Mammary epithelial cell (primary cell): ENCODE measurements at regions of chr11 and their contacts with region 1.

Region 1: GRCh38 chr11:86116386-86116726 is 47.5 kb upstream of the PICALM start:
- DNase-seq: peak; percentile 94
- H3K4me3 ChIP-seq: peak overlapping the region in 2 of 3 experiments; percentile 20 to 27
- H3K27ac ChIP-seq: peak overlapping the region; percentile 98
- H3K4me1 ChIP-seq: peaks cover 27% of the 10 kb centered on the region
- H3K27me3 ChIP-seq: no peaks in the 10 kb centered on the region
- CTCF ChIP-seq: no peak

Region 2: DNA sequence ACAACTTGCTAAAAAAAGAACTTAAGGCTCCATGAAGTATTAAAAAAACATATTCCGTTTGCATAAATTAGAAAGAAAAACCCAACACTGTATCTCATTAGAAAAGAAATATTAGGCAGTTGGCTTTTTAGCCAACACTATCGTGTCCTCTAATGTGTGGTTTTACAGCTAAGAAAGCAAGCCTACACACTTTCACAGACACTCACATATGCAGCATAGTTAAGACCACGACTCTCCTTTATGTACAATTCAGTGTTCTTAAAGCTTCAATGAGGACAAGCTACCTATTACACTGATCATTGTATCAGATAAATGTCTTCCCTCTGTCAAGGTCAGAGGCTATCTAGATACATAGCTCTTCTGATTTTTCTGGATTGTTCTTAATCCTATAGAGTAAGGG is 127.6 kb before region 1 on chr11:
- CTCF ChIA-PET with region 1: no interaction called
- dilution Hi-C with region 1: no loop called
- in situ Hi-C with region 1: no loop called
- intact Hi-C with region 1: no loop called
- DNase-seq: no peak
- H3K4me3 ChIP-seq: no peak overlapping the region
- H3K27ac ChIP-seq: no peak overlapping the region
- H3K4me1 ChIP-seq: no peaks in the 10 kb centered on the region
- H3K27me3 ChIP-seq: no peaks in the 10 kb centered on the region
- CTCF ChIP-seq: no peak

Region 3: GRCh38 chr11:86151174-86152005 is 35.0 kb after region 1 on chr11:
- CTCF ChIA-PET with region 1: interaction called, 3 read pairs
- dilution Hi-C with region 1: no loop called
- in situ Hi-C with region 1: no loop called
- intact Hi-C with region 1: loop called (anchors 2 kb)
- DNase-seq: no peak
- H3K4me3 ChIP-seq: peak overlapping the region in 1 of 3 experiments; percentile 13
- H3K27ac ChIP-seq: peak overlapping the region; percentile 90
- H3K4me1 ChIP-seq: peaks cover 54% of the 10 kb centered on the region
- H3K27me3 ChIP-seq: no peaks in the 10 kb centered on the region
- CTCF ChIP-seq: no peak

Region 4: DNA sequence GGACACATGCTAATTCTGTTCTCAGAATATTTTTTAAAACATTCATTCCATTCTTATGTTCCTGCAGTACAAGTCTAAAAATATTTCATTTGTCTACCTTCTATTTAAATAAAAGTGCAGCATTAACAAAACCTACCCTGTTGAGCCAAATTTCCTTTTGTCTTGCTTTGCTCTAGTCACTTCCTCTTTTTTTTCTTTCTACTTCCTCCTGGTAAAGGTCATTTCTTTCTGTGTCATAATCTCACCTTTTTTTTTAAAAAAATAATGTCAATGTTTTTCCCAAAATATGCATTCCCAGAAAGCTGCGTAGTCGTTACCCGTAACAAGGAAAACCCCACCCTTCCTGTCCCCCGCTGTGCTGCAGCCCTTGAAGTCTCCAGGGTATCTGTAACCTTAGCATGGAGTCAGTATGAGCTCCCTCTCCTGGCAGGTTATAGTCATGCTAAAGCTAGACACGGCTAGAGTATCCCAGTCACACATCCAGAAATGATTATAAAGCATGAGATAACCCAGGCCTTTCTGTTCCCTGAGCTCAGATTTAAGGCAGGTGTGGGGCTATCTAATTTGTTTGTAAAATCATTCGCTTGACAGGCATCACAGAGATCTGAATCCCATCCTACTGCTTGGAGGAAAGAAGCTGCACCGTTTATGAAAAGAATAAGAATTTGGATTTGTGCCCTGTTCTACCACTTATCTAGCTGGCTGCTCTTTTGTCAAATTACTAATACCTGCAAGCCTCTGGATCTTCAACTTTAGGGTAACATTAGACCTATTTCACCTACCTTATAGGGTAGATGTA is 77.1 kb after region 1 on chr11:
- CTCF ChIA-PET with region 1: interaction called, 6 read pairs
- dilution Hi-C with region 1: no loop called
- in situ Hi-C with region 1: no loop called
- intact Hi-C with region 1: loop called (anchors 1 kb)
- DNase-seq: peak; percentile 69
- H3K4me3 ChIP-seq: peak overlapping the region in 2 of 3 experiments; percentile 14 to 18
- H3K27ac ChIP-seq: peak overlapping the region; percentile 5
- H3K4me1 ChIP-seq: peaks cover 7% of the 10 kb centered on the region
- H3K27me3 ChIP-seq: no peaks in the 10 kb centered on the region
- CTCF ChIP-seq: peak; percentile 82 to 89

Region 5: DNA sequence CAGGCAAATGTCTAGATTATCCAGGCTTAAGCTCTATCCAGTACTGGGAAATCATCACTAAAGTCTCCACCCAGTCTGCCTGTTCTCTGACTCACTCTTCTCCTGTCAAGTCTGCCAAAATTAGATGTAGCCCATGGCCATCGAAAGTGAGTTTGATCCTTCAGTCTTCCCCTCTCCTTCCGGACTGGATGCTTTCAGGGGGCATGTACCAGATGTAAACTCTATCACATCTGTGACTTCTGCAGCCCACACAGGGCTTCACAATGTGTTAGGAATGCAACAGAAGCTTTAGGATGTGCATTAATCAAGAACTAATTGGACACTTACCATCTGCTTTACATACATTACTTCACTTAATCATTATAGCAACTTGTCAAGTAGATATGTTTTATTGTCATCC is 543.7 kb after region 1 on chr11:
- CTCF ChIA-PET with region 1: no interaction called
- dilution Hi-C with region 1: no loop called
- in situ Hi-C with region 1: no loop called
- intact Hi-C with region 1: no loop called
- DNase-seq: peak; percentile 33
- H3K4me3 ChIP-seq: no peak overlapping the region
- H3K27ac ChIP-seq: no peak overlapping the region
- H3K4me1 ChIP-seq: peaks cover 14% of the 10 kb centered on the region
- H3K27me3 ChIP-seq: no peaks in the 10 kb centered on the region
- CTCF ChIP-seq: no peak